ENCODE measurements at regions of chr12 and their contacts with region 1.

Region 1: GRCh38 chr12:4287325-4288211 is 14.0 kb downstream of the CCND2 start:
- DNase-seq: no peak
- ATAC-seq: no peak
- H3K4me3 ChIP-seq: no peak overlapping the region
- H3K27ac ChIP-seq: no peak overlapping the region
- H3K4me1 ChIP-seq: no peaks in the 10 kb centered on the region
- H3K27me3 ChIP-seq: no peaks in the 10 kb centered on the region; the same call in 1 of the 2 replicates
- CTCF ChIP-seq: no peak
- POLR2A ChIP-seq: no peak
- RAD21 ChIP-seq: no peak

Region 2: GRCh38 chr12:3990501-3991280 is 296.9 kb before region 1 on chr12:
- CTCF ChIA-PET with region 1: no interaction called
- POLR2A ChIA-PET with region 1: no interaction called
- dilution Hi-C with region 1: no loop called
- in situ Hi-C with region 1: loop called (anchors 5 kb)
- intact Hi-C with region 1: no loop called
- DNase-seq: no peak
- ATAC-seq: no peak
- H3K4me3 ChIP-seq: no peak overlapping the region
- H3K27ac ChIP-seq: no peak overlapping the region
- H3K4me1 ChIP-seq: no peaks in the 10 kb centered on the region
- H3K27me3 ChIP-seq: peaks cover 29% of the 10 kb centered on the region
- CTCF ChIP-seq: no peak
- POLR2A ChIP-seq: no peak
- RAD21 ChIP-seq: no peak

Measured in IMR-90 (cell line).